Heart right ventricle (tissue), 16 donors: ENCODE measurements at regions of chr7 and their contacts with region 1.

Region 1: GRCh38 chr7:30800785-30801252 is 29.6 kb downstream of the MINDY4 start:
- DNase-seq: peak in 1 of 2 donors; percentile 70
- ATAC-seq: peak; percentile 49 to 82 (median 76)
- H3K4me3 ChIP-seq: no peak overlapping the region
- H3K27ac ChIP-seq: peak overlapping the region in 7 of 10 donors; percentile 4 to 69 (median 26)
- H3K4me1 ChIP-seq: peaks cover 3 to 79% (median 61%) of the 10 kb centered on the region in 9 donors
- H3K27me3 ChIP-seq: no peaks in the 10 kb centered on the region
- CTCF ChIP-seq: peak; percentile 39 to 87 (median 75)

Region 2: GRCh38 chr7:30911561-30911969 is 110.7 kb after region 1 on chr7 and contains the start of gene AQP1:
- intact Hi-C with region 1: no loop called
- DNase-seq: peak; percentile 87 to 92
- ATAC-seq: peak; percentile 52 to 76 (median 74)
- H3K4me3 ChIP-seq: peak within 1 kb of the TSS; percentile 30 to 70 (median 54)
- H3K27ac ChIP-seq: peak within 1 kb of the TSS; percentile 69 to 91 (median 85)
- H3K4me1 ChIP-seq: peaks cover 40 to 96% (median 81%) of the 10 kb centered on the region in 9 donors
- H3K27me3 ChIP-seq: no peaks in the 10 kb centered on the region
- CTCF ChIP-seq: peak in 4 of 9 donors; percentile 11 to 33 (median 30)
- total RNA-seq, gene AQP1: 101 to 274 (median 171) TPM

Region 3: GRCh38 chr7:30931161-30931928 is 130.5 kb after region 1 on chr7:
- intact Hi-C with region 1: loop called in 5 of 10 experiments (anchors 5 to 10 kb)
- DNase-seq: no peak
- ATAC-seq: peak in 7 of 8 donors; percentile 15 to 60 (median 37)
- H3K4me3 ChIP-seq: no peak overlapping the region
- H3K27ac ChIP-seq: peak overlapping the region in 9 of 10 donors; percentile 50 to 72 (median 63)
- H3K4me1 ChIP-seq: peaks cover 10 to 57% (median 39%) of the 10 kb centered on the region in 9 donors
- H3K27me3 ChIP-seq: no peaks in the 10 kb centered on the region
- CTCF ChIP-seq: no peak

Region 4: DNA sequence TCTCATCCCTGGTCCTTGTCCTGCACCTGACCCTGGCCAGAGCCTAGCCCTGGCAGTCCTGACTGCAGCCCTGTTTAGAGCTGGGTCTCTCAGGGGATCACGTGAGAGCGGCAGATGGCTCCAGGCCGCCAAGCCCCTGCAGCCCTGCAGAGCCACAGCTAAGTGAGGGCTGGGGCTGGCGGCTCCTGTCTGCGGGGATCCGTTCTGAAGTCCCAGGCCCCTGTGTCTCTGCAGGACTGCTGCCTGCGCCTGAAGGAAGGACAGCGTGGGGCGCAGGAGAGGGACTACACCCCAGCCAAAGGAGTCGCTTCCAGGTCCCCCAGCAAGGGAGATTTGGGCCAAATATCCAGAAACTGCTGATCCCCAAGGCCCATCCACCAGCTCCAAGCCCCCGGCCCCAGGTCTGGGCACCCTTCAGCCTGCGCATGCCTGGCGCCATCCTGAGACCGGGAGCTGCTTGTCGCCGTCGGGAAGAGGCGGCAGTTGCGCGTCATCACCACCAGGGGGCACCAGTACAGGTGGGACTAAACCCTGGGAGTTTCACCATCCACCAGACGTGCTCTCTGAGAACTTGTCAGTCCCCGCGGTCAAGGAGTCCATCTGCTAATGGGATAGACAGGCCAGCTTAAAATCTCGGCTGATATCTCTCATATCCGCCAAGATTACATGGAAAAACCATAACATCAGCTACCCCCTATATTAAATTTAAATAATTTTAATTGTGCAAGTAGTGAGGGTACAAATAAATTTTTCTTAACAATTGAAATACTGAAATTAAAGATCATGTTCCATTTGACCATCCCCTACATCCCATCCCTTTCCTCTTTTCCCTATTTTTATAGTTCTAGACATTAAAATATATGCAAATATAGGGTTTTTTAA is 137.9 kb after region 1 on chr7:
- intact Hi-C with region 1: loop called in 5 of 10 experiments (anchors 5 to 10 kb)
- DNase-seq: peak; percentile 84 to 90
- ATAC-seq: peak; percentile 68 to 91 (median 84)
- H3K4me3 ChIP-seq: peak overlapping the region in 7 of 10 donors; percentile 1 to 37 (median 26)
- H3K27ac ChIP-seq: peak overlapping the region in 1 of 10 donors; percentile 1
- H3K4me1 ChIP-seq: peaks cover 2 to 32% (median 15%) of the 10 kb centered on the region in 9 donors
- H3K27me3 ChIP-seq: peaks cover 0 to 21% (median 0%) of the 10 kb centered on the region in 7 donors
- CTCF ChIP-seq: peak; percentile 95 to 99 (median 99)

Region 5: GRCh38 chr7:30974605-30975255 is 173.9 kb after region 1 on chr7:
- intact Hi-C with region 1: loop called (anchors 1 to 5 kb)
- DNase-seq: peak; percentile 48 to 69
- ATAC-seq: peak; percentile 69 to 89 (median 79)
- H3K4me3 ChIP-seq: no peak overlapping the region
- H3K27ac ChIP-seq: no peak overlapping the region
- H3K4me1 ChIP-seq: peaks cover 0 to 16% (median 7%) of the 10 kb centered on the region in 9 donors
- H3K27me3 ChIP-seq: peaks cover 0 to 36% (median 0%) of the 10 kb centered on the region in 7 donors
- CTCF ChIP-seq: peak; percentile 66 to 86 (median 79)

Region 6: DNA sequence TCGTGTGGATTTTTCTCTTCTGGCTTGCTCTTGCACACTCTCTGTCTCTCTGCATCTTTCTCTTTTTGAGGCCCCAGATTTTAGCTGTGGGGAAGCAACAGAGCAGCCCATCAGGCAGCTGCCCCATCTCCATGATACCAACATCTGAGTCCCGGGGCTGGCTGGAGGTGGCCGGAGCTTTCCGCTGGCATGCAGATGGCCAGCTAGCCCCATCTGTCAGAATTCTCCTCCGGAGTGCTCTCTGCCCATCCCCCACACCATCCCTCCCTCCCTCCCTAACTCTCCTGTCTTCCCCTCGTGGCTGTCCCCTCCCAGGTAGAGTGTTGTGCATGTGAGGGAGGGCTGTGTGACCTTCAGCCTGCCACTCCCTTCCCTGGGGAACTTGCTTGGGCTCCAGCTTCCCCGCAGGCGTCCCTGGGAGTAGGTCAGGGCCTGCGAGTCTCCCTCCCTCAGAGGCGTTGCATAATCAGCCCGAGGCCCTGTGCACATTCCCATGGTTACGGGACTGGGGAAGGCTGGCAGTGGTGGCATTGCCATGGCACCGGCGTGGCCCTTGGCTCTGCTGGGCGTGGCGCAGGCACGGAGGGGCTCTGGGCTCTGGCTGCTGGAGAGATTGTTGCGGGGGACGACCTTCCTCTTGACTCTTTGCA is 187.7 kb after region 1 on chr7:
- intact Hi-C with region 1: no loop called
- DNase-seq: peak in 1 of 2 donors; percentile 56
- ATAC-seq: peak in 7 of 8 donors; percentile 12 to 58 (median 45)
- H3K4me3 ChIP-seq: no peak overlapping the region
- H3K27ac ChIP-seq: peak overlapping the region in 3 of 10 donors; percentile 7 to 55 (median 52)
- H3K4me1 ChIP-seq: peaks cover 0 to 18% (median 10%) of the 10 kb centered on the region in 9 donors
- H3K27me3 ChIP-seq: peaks cover 0 to 18% (median 10%) of the 10 kb centered on the region in 7 donors
- CTCF ChIP-seq: no peak

Region 7: DNA sequence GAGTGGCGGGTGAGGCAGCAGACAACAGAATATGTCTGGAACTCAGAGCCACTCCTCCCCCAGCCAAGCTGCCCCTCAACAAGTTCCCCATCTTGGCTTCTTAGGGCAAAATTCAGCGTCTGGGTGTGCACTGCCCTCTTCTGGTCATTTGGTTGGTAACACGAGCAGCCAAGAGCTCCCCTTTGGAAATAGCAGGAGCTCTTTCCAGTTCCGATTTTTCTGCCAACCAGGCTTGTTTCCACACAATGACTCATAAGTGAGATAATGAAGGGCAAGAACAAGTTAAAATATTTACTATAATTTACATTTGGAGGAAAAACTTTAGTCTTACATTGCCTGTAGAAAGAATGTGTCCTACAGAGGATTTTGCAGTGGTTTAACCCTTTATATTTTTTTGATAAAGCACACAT is 321.8 kb after region 1 on chr7:
- intact Hi-C with region 1: loop called (anchors 2 to 10 kb)
- DNase-seq: peak; percentile 40 to 77
- ATAC-seq: peak; percentile 64 to 86 (median 80)
- H3K4me3 ChIP-seq: no peak overlapping the region
- H3K27ac ChIP-seq: no peak overlapping the region
- H3K4me1 ChIP-seq: peaks cover 0 to 6% (median 0%) of the 10 kb centered on the region in 9 donors
- H3K27me3 ChIP-seq: peaks cover 0 to 7% (median 0%) of the 10 kb centered on the region in 7 donors
- CTCF ChIP-seq: peak; percentile 77 to 93 (median 89)

Region 8: GRCh38 chr7:31432836-31433340 is 632.1 kb after region 1 on chr7:
- intact Hi-C with region 1: no loop called
- DNase-seq: no peak
- ATAC-seq: no peak
- H3K4me3 ChIP-seq: no peak overlapping the region
- H3K27ac ChIP-seq: no peak overlapping the region
- H3K4me1 ChIP-seq: no peaks in the 10 kb centered on the region
- H3K27me3 ChIP-seq: peaks cover 0 to 29% (median 6%) of the 10 kb centered on the region in 7 donors
- CTCF ChIP-seq: no peak